Adrenal gland (tissue), 19 donors: ENCODE measurements at regions of chr1 and their contacts with region 1.

Region 1: DNA sequence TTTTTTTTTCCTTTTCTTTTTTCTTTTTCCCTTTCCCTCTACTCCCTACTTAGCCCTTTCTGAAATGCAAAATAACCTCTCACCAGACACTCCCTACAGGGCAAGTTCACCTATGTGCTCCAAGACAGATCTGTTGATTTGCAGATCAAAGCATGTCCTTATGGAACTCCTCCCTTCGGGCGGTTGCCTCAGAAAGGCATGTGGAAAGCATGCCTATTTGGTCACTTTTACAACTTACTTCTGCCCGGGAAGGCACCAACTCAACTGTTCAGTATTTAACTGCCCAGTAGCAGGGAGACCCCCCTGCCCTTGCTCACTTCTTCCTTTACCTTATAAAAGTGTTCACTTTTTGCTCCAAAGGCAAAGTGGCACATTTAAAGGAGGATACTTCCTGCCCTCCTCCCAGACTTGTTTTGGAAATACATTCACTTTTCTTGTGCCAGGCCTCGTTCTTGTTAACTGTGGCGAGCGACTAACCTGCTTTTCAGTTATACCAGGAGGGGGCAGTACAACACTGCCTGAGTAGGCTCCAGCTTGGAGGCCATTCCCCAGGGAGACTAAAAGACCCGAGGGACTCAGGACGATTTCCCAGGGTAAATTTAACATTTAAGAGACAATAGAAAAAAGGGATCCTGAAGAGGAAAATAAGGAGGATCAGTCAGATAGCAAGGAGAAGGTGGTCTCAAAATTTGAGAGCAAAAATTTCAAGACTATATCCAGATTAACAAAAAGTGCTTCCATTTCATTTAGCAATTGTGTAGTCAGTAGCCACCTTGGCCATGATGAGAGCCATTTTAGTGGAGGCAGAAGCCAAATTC is 12.3 kb upstream of the SLAMF7 start:
- DNase-seq: peak; percentile 57 to 77 (median 67)
- H3K4me3 ChIP-seq: no peak overlapping the region
- H3K27ac ChIP-seq: no peak overlapping the region
- H3K4me1 ChIP-seq: peaks cover 0 to 7% of the 10 kb centered on the region in 2 donors
- H3K27me3 ChIP-seq: no peaks in the 10 kb centered on the region
- CTCF ChIP-seq: peak; percentile 74 to 90 (median 86)
- POLR2A ChIP-seq: no peak

Region 2: DNA sequence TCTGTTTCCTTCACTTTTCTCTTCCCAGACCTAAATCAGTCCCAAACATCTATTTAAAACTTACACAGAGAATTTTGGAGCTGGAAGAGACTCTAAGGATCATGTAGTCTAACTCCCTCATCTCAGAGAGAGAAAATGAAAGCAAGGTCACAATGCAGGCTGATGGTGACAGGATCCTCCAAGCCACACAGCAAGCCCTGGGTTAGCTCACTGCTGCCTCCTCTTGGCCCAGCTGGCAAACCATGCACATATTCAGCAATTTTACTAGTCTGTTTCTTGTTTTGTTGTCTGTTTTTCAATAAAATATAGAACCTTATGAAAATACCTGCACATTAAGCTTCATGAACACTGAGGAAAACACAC is 41.6 kb after region 1 on chr1:
- intact Hi-C with region 1: loop called in 1 of 2 experiments (anchors 5 kb)
- DNase-seq: peak; percentile 32 to 75 (median 57)
- H3K4me3 ChIP-seq: no peak overlapping the region
- H3K27ac ChIP-seq: no peak overlapping the region
- H3K4me1 ChIP-seq: no peaks in the 10 kb centered on the region
- H3K27me3 ChIP-seq: no peaks in the 10 kb centered on the region
- CTCF ChIP-seq: peak; percentile 39 to 72 (median 62)
- POLR2A ChIP-seq: no peak

Region 3: DNA sequence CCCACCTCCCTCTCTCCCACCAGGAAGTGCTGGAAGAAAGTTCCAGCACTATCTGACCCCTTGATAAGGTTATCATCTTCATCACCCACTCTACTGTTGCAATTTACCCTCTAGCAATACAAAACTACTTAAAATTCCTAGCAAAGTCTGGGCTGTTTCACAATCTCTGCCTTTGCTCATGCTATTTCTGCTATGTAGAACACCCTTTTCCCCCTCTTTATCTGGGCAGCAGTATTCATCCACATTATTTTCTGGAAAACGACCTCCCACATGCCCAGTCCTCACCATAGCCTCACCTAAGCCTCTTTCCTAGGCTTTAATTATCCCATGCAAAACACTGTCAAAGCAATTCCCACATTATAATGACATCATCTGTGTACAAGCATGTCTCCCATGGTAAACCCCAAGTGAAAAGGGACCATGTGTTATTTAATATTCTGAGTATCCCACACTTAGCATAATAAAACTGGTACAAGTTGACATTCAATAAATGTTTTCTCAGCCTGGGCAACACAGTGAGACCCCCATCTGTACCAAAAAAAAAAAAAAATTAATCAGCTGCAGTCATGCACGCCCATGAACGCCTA is 282.3 kb after region 1 on chr1:
- intact Hi-C with region 1: no loop called
- DNase-seq: peak in 1 of 7 donors; percentile 3
- H3K4me3 ChIP-seq: no peak overlapping the region
- H3K27ac ChIP-seq: no peak overlapping the region
- H3K4me1 ChIP-seq: peaks cover 9 to 13% of the 10 kb centered on the region in 2 donors
- H3K27me3 ChIP-seq: no peaks in the 10 kb centered on the region
- CTCF ChIP-seq: no peak
- POLR2A ChIP-seq: no peak